Breast epithelium (tissue), 4 donors: ENCODE measurements at regions of chr4 and their contacts with region 1.

Region 1: DNA sequence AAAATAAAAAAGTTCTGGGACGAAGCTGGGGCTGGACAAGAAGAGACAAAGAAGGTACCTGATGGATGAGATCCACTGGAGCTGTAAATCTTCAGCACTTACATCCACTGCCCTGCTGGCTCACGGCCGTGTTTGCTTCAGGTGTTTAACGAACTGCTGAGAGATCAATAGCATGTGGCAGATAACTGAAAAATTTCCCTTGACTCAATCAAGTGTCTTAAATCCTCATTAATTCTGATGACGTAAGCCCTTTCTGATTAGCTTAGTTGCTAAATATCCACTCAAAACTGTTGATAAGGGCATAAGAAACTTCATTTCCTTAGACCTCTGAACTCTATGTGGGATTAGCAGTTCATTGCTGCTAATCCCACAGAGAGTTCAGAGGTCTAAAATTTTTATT is 354.2 kb upstream of the HS3ST1 start:
- DNase-seq: no peak
- H3K4me3 ChIP-seq: no peak overlapping the region
- H3K27ac ChIP-seq: no peak overlapping the region
- H3K4me1 ChIP-seq: no peaks in the 10 kb centered on the region
- H3K27me3 ChIP-seq: no peaks in the 10 kb centered on the region
- CTCF ChIP-seq: no peak
- POLR2A ChIP-seq: no peak

Region 2: DNA sequence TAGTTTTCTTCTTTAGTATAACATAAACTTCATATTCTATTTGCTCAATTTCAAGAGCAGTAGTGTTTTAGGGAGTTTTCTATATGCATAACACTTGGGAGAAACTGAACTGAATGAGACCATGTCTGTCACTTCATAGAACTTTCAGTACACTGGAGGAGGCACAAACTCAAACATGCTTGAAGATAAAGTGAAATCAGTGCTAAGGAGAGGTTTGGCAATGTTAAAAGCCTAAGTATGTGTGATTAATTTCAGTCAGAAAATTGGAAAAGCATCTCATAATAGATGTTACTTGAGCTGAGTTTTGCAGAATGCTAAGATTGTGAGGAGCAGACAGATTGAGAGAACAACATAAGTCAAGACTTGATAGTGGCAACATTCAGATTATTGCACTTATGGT is 57.0 kb after region 1 on chr4:
- intact Hi-C with region 1: loop called (anchors 2 kb)
- DNase-seq: no peak
- H3K4me3 ChIP-seq: no peak overlapping the region
- H3K27ac ChIP-seq: no peak overlapping the region
- H3K4me1 ChIP-seq: no peaks in the 10 kb centered on the region
- H3K27me3 ChIP-seq: no peaks in the 10 kb centered on the region
- CTCF ChIP-seq: no peak
- POLR2A ChIP-seq: no peak